ENCODE measurements at regions of chr1 and their contacts with region 1.

Region 1: DNA sequence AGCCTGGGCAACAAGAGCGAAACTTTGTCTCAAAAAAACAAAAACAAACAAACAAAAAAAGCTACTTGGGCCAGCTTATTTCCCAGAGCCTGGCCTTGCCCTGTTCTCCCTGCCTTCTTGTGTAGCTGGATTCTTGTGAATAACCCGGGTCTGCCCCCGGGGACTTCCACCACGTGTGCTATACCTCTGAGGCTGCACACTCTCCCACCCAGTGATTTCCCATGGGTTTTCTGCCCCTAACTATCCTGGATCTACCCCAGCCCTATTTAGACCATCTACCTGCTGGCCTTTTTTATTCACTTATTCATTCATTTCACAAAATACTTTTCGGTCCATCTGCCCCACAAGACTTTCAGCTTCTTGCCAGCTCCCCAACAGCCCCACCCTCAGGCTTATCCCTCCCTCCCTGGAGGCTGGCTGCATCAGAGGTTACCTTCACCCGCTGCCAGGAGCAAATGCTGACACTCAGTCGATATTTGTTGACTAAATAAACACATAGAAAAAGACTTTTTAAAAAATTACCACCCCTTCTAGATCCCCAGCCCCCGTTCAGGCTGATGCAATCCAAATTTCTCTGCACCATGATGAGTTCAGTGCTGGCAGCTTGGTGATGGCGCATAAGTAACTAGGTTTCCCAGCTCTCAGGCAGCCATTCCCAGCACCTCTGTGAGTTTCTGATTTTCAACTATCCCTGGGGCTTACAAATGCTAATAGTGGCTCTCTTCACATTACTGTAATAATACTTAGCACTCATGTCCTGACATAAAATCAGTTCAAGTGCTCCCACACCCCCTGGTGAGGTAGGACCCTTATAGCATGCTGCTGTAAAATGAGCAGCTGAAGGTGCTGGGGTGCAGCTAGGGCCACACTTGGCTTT is 30.7 kb upstream of the TARBP1 start:
- DNase-seq: no peak
- H3K4me3 ChIP-seq: no peak overlapping the region
- H3K27ac ChIP-seq: no peak overlapping the region
- H3K4me1 ChIP-seq: peaks cover 22% of the 10 kb centered on the region
- H3K27me3 ChIP-seq: no peaks in the 10 kb centered on the region
- CTCF ChIP-seq: no peak

Region 2: DNA sequence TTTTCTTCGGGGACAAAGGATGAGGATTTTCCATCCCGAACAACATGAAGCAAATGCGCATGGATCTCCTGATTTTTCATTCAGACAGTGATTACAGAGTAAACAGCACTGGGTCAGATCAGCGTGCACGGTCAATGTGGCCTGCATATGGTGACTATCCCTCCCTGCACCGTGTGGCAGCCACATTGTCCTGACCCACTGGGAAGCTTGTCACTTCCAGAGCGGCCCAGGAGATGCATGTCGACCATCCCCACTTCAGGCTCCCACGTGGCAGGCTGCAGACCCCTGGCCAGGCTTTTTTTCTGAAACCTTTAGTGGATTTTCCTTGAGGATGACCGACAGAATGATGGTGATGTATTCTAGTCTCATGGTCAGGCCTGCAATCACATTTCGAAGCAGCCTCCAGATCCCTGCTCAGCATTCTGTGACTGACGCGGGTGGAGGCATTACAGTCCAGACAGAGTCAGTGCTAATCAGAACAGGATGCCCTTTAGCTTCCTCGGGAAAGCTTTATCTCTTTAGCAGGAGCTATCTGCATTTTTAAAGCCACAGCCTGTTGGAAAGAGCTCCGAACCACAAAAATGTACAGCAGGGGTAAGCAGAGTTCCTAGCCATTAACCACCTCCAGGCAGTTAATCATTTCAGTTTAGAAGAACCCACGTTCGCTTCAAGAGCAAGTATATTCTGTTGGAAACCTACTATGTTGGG is 43.6 kb after region 1 on chr1:
- CTCF ChIA-PET with region 1: no interaction called
- dilution Hi-C with region 1: loop called (anchors 5 kb)
- in situ Hi-C with region 1: no loop called
- intact Hi-C with region 1: no loop called
- DNase-seq: no peak
- H3K4me3 ChIP-seq: no peak overlapping the region
- H3K27ac ChIP-seq: no peak overlapping the region
- H3K4me1 ChIP-seq: no peaks in the 10 kb centered on the region
- H3K27me3 ChIP-seq: no peaks in the 10 kb centered on the region
- CTCF ChIP-seq: no peak

Region 3: DNA sequence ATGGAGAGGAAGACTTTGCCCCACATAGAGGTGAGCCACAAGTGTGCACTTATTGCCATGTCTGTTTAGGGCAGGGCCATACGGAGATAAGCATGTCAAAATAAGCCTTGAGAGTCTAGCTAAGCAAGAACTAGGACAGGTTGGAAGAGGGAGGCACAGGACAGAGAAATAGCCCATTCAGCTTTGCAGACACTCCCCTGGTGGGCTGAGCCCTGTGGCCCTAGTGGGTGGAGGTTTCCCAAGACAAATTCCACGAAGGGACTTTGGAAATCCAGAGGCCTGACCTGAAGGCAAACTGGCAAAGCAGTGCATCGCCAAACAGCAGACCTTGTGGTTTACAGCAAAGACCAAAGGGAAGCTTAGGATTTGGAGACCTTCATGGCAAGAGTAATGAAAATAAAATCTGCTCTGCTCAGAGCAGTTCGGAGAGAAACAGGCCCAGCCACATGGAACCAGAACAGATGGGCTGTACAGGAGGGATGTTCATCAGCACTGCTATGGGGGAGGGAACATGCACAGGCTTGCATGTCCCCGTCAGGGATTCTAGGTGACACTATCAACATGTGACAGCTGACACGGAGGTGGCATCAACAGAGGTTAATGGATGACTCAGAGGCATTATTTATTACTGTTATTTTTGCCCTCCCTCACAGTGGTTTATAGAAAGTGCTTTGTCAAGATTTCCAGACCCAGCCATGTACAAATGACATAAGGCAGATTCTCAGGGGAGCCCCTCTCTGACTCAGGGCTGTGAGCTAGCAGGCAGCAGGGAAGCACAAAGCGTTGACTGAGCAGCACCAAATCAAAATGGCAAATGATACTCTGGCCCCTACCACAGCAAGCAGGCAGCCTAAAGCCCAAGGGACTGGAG is 190.3 kb after region 1 on chr1:
- CTCF ChIA-PET with region 1: no interaction called
- dilution Hi-C with region 1: loop called (anchors 5 kb)
- in situ Hi-C with region 1: no loop called
- intact Hi-C with region 1: no loop called
- DNase-seq: peak; percentile 82
- H3K4me3 ChIP-seq: no peak overlapping the region
- H3K27ac ChIP-seq: no peak overlapping the region
- H3K4me1 ChIP-seq: peaks cover 12% of the 10 kb centered on the region
- H3K27me3 ChIP-seq: no peaks in the 10 kb centered on the region
- CTCF ChIP-seq: no peak

Measured in mammary epithelial cell (primary cell).